ENCODE measurements at regions of chr17 and their contacts with region 1.

Region 1: GRCh38 chr17:42997984-42998938 is at the start of gene RPL27:
- DNase-seq: peak; percentile 99
- H3K4me3 Mint-ChIP-seq: peak within 1 kb of the TSS; percentile 98
- H3K27ac Mint-ChIP-seq: peak within 1 kb of the TSS; percentile 98
- H3K4me1 Mint-ChIP-seq: peaks cover 30% of the 10 kb centered on the region
- H3K27me3 Mint-ChIP-seq: no peaks in the 10 kb centered on the region
- total RNA-seq, gene RPL27: 1,552 to 1,589 TPM

Region 2: GRCh38 chr17:42266918-42267778 is 731.1 kb before region 1 on chr17:
- CTCF ChIA-PET with region 1: no interaction called
- POLR2A ChIA-PET with region 1: no interaction called
- intact Hi-C with region 1: no loop called
- DNase-seq: peak; percentile 66
- H3K4me3 Mint-ChIP-seq: peak overlapping the region; percentile 21
- H3K27ac Mint-ChIP-seq: peak overlapping the region; percentile 97
- H3K4me1 Mint-ChIP-seq: peaks cover 57% of the 10 kb centered on the region
- H3K27me3 Mint-ChIP-seq: no peaks in the 10 kb centered on the region

Region 3: DNA sequence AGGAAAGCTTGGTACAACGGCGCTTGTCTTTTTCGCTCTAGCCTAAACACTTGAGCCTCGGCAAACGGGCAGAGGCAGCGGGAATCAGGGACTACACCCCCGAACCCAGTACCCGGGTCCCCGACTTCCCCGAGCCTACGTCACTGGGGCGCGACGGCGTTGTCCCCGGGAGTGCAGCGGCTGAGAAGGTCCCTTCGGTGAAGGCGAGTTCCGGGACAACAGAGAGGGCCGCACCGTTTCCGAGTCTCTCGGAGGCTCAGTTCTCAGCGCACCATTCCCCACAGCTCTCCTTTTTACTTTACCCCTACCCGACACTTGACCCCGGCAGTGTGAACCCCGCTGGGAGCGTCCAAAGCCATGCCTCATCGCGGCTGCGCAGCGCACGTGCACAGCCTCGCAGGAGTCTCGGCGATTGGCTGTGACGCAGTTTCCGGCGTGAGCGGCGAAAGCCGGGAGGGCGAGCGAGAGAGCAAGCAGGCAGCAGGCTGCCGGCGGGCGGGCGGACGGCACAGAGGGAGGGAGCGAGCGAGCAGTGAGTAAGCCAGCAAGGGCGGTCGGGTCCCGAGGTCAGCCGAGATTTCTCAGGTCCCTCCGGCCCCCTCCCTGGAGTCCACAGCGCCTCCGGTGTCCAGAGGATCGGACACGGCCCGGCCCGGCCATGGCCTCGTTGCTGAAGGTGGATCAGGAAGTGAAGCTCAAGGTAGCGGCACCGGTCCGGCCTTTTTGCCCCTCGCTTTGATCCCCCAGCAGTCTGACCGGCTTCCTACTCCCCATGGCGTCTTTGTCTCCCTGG is 165.1 kb before region 1 on chr17 and contains the start of gene PSME3:
- CTCF ChIA-PET with region 1: interaction called, 7 read pairs
- POLR2A ChIA-PET with region 1: interaction called, 10 read pairs
- intact Hi-C with region 1: loop called (anchors 5 kb)
- DNase-seq: peak; percentile 93
- H3K4me3 Mint-ChIP-seq: peak within 1 kb of the TSS; percentile 97
- H3K27ac Mint-ChIP-seq: peak within 1 kb of the TSS; percentile 98
- H3K4me1 Mint-ChIP-seq: peaks cover 30% of the 10 kb centered on the region
- H3K27me3 Mint-ChIP-seq: no peaks in the 10 kb centered on the region
- total RNA-seq, gene PSME3: 111 to 116 TPM

Region 4: DNA sequence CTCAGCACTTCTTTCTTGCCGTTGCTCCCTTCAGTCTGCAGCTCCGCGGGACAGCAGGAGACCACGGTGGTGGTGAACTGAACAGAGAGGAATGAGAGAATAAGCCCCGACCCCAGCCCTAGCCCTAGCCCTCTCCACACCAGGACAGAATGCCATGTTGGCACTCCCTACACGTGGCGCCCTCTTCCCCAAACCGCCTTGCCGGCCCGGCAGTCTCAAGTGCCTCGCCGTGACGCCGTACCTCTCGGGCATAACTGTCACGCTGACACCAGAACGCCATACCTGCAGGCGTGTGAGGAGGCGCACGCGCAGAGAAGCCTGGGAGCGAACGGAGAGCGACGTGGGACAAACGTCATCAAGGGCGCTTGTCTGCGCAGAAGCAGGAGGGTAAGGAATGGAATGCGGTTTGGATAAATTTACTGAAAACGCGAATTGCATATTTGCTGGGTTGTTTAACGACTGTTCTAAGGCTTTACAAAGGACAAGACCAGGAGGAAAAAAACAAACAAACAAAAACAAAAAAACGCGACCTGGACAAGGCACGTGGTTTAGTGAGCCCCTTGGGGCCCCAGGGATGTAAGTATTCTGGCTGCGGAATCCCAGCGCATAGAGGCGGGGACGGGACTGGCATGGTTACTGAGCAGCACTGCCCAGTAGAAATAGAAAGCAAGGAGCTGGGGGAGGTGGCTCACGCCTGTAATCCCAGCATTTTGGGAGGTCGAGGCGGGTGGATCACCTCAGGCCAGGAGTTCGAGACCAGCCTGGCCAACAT is 33.9 kb before region 1 on chr17 and contains the start of gene AARSD1:
- CTCF ChIA-PET with region 1: interaction called, 8 read pairs
- POLR2A ChIA-PET with region 1: interaction called, 8 read pairs
- intact Hi-C with region 1: loop called (anchors 1 kb)
- DNase-seq: peak; percentile 96
- H3K4me3 Mint-ChIP-seq: peak within 1 kb of the TSS; percentile 97
- H3K27ac Mint-ChIP-seq: peak within 1 kb of the TSS; percentile 91
- H3K4me1 Mint-ChIP-seq: peaks cover 16% of the 10 kb centered on the region
- H3K27me3 Mint-ChIP-seq: no peaks in the 10 kb centered on the region
- total RNA-seq, gene AARSD1: 38.7 to 43.1 TPM

Region 5: DNA sequence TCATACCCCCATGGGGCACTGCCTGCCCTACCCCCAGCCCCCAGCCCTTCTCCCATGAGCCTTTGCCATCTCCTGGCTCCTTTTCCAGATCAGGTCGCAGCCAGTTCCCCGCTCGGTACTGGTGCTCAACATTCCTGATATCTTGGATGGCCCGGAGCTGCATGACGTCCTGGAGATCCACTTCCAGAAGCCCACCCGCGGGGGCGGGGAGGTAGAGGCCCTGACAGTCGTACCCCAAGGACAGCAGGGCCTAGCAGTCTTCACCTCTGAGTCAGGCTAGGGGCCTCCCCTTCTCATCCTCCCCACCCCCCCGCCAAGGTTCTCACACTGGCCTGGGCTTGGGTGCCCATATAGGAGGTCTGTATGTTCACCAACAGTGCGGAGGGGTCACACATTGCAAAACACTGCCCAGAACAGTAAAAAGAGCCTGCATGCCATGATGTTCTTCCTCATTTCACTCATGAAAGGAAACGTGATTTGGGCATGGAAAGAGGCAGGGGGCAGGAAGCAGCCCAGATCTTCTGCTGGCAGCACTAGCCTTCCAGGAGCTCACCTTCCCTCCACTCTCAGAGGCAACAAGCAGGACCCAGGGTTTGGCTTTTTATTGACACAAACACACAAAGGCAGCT is 15.9 kb after region 1 on chr17:
- CTCF ChIA-PET with region 1: interaction called, 29 read pairs
- POLR2A ChIA-PET with region 1: interaction called, 14 read pairs
- intact Hi-C with region 1: no loop called
- DNase-seq: no peak
- H3K4me3 Mint-ChIP-seq: no peak overlapping the region
- H3K27ac Mint-ChIP-seq: no peak overlapping the region
- H3K4me1 Mint-ChIP-seq: peaks cover 14% of the 10 kb centered on the region
- H3K27me3 Mint-ChIP-seq: no peaks in the 10 kb centered on the region

Region 6: DNA sequence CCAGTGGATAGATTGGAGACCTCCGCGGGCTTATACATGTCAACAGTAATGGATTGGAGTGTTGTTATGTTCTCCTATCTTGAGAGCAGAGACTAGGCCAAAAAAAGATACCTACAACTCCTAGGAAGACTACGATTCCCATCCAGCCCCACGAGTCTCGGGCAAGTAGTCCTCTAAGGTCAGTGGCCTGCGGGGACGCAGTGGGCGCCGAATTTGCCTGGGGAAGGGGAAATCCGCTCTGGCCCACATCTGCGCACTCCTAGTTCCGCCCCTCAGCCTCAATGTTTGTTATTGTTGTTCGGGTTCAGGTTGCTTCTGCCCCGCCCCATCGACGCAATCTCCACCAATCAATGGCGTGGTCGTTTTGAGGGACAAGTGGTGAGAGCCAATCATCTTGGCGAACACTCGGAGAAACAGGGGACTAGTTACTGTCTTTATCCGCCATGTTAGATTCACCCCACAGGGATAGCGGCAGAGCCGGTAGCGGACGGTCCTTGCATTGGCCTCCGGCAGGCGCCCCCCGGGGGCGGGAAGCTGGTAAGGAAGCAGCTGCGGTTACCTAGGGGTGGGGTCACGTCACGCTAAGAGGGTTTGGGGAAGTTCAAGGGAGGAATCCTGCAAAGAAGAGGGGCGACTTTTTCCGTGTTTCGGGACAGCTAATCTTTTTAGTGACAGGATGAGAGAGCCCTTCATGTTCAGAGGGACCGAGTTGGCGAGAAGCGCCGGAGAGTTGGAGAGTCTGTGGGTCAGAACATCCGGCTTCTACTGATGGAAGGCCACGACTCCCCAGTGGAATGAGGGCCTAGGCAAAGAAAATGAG is 172.7 kb after region 1 on chr17 and contains the start of gene NBR1:
- CTCF ChIA-PET with region 1: no interaction called
- POLR2A ChIA-PET with region 1: interaction called, 11 read pairs
- intact Hi-C with region 1: no loop called
- DNase-seq: peak; percentile 99
- H3K4me3 Mint-ChIP-seq: no peak within 1 kb of the TSS
- H3K27ac Mint-ChIP-seq: no peak within 1 kb of the TSS
- H3K4me1 Mint-ChIP-seq: peaks cover 25% of the 10 kb centered on the region
- H3K27me3 Mint-ChIP-seq: no peaks in the 10 kb centered on the region
- total RNA-seq, gene NBR1: 62.0 to 65.9 TPM

Region 7: DNA sequence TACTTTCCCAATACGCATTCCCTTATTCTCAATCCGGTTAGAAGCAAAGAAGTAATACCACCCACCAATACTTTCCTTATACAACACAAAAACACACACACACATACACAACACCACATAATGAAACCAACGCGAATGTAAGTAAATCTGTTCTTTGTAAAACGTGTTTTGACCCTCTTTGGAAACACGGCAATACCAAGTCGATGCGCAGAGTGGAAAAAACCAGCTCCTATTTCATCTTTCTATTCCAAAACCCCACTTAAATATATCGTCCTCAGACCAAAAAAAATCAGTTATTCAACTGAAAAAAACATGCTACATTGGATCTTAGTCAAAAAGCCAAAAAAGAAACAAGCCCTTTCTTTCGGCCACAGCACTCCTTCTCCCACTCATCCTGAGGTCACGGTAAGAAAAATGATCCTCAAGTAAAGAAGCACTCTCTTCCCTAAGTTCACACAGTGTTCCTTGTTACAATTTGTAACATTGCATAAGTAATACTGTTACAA is 369.5 kb after region 1 on chr17:
- CTCF ChIA-PET with region 1: no interaction called
- POLR2A ChIA-PET with region 1: interaction called, 10 read pairs
- intact Hi-C with region 1: no loop called
- DNase-seq: peak; percentile 49
- H3K4me3 Mint-ChIP-seq: peak overlapping the region; percentile 94
- H3K27ac Mint-ChIP-seq: peak overlapping the region; percentile 100
- H3K4me1 Mint-ChIP-seq: peaks cover 36% of the 10 kb centered on the region
- H3K27me3 Mint-ChIP-seq: no peaks in the 10 kb centered on the region